ENCODE measurements at regions of chr2 and their contacts with region 1.

Region 1: GRCh38 chr2:172710584-172711024 is 25.0 kb upstream of the RAPGEF4 start:
- DNase-seq: no peak
- ATAC-seq: peak; percentile 55
- H3K4me3 ChIP-seq: no peak overlapping the region
- H3K27ac ChIP-seq: no peak overlapping the region
- H3K4me1 ChIP-seq: no peaks in the 10 kb centered on the region
- H3K27me3 ChIP-seq: peaks cover 0 to 6% of the 10 kb centered on the region in 2 experiments; a peak in 2 of 4 replicates
- CTCF ChIP-seq: peak; percentile 61 to 67 (median 63); a peak in 5 of 6 replicates
- EP300 ChIP-seq: no peak
- POLR2A ChIP-seq: no peak
- RAD21 ChIP-seq: peak; percentile 75

Region 2: GRCh38 chr2:172484253-172484652 is 226.4 kb before region 1 on chr2:
- CTCF ChIA-PET with region 1: no interaction called
- POLR2A ChIA-PET with region 1: no interaction called
- RAD21 ChIA-PET with region 1: no interaction called
- SMC1A ChIA-PET with region 1: no interaction called
- in situ Hi-C with region 1: no loop called
- intact Hi-C with region 1: loop called (anchors 10 kb)
- DNase-seq: no peak
- ATAC-seq: no peak
- H3K4me3 ChIP-seq: no peak overlapping the region
- H3K27ac ChIP-seq: no peak overlapping the region
- H3K4me1 ChIP-seq: no peaks in the 10 kb centered on the region
- H3K27me3 ChIP-seq: no peaks in the 10 kb centered on the region
- CTCF ChIP-seq: peak in 2 of 3 experiments; percentile 28 to 39; a peak in 4 of 6 replicates
- EP300 ChIP-seq: no peak
- POLR2A ChIP-seq: no peak
- RAD21 ChIP-seq: peak; percentile 25

Region 3: GRCh38 chr2:172588931-172589330 is 121.7 kb before region 1 on chr2:
- CTCF ChIA-PET with region 1: interaction called, 13 read pairs
- POLR2A ChIA-PET with region 1: no interaction called
- RAD21 ChIA-PET with region 1: no interaction called
- SMC1A ChIA-PET with region 1: no interaction called
- in situ Hi-C with region 1: no loop called
- intact Hi-C with region 1: loop called (anchors 2 kb)
- DNase-seq: no peak
- ATAC-seq: no peak
- H3K4me3 ChIP-seq: no peak overlapping the region
- H3K27ac ChIP-seq: no peak overlapping the region
- H3K4me1 ChIP-seq: no peaks in the 10 kb centered on the region
- H3K27me3 ChIP-seq: no peaks in the 10 kb centered on the region
- CTCF ChIP-seq: no peak
- EP300 ChIP-seq: no peak
- POLR2A ChIP-seq: no peak
- RAD21 ChIP-seq: no peak

Region 4: GRCh38 chr2:172596776-172597175 is 113.8 kb before region 1 on chr2:
- CTCF ChIA-PET with region 1: interaction called, 13 read pairs
- POLR2A ChIA-PET with region 1: no interaction called
- RAD21 ChIA-PET with region 1: no interaction called
- SMC1A ChIA-PET with region 1: no interaction called
- in situ Hi-C with region 1: no loop called
- intact Hi-C with region 1: loop called (anchors 2 kb)
- DNase-seq: peak; percentile 17
- ATAC-seq: no peak
- H3K4me3 ChIP-seq: no peak overlapping the region
- H3K27ac ChIP-seq: peak overlapping the region; percentile 48
- H3K4me1 ChIP-seq: no peaks in the 10 kb centered on the region
- H3K27me3 ChIP-seq: no peaks in the 10 kb centered on the region
- CTCF ChIP-seq: no peak
- EP300 ChIP-seq: no peak
- POLR2A ChIP-seq: no peak
- RAD21 ChIP-seq: no peak

Region 5: DNA sequence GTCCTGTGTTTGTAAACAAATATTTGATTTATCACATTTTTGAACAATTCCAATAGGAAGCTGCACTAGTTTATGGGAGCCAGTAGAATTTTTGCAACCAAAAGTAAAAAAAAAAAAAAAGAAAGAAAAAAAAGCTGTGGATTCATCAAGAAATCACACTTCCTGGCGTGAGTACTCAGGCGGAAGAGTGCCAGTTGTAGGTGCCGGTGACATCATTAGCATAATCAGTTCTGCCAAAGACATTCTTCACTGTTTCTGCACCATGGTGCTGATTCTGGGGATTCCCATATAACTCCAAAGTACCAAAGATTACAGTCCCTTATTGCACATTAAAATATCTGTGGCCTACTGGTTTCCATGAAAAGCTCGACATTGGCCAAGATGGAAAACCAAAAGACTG is 57.8 kb after region 1 on chr2:
- CTCF ChIA-PET with region 1: no interaction called
- POLR2A ChIA-PET with region 1: no interaction called
- RAD21 ChIA-PET with region 1: no interaction called
- SMC1A ChIA-PET with region 1: no interaction called
- in situ Hi-C with region 1: no loop called
- intact Hi-C with region 1: no loop called
- DNase-seq: no peak
- ATAC-seq: no peak
- H3K4me3 ChIP-seq: no peak overlapping the region
- H3K27ac ChIP-seq: no peak overlapping the region
- H3K4me1 ChIP-seq: no peaks in the 10 kb centered on the region
- H3K27me3 ChIP-seq: no peaks in the 10 kb centered on the region
- CTCF ChIP-seq: no peak
- EP300 ChIP-seq: no peak
- POLR2A ChIP-seq: no peak
- RAD21 ChIP-seq: no peak

Region 6: GRCh38 chr2:173898178-173898668 is 1187.6 kb after region 1 on chr2:
- CTCF ChIA-PET with region 1: no interaction called
- POLR2A ChIA-PET with region 1: no interaction called
- RAD21 ChIA-PET with region 1: no interaction called
- SMC1A ChIA-PET with region 1: no interaction called
- in situ Hi-C with region 1: no loop called
- intact Hi-C with region 1: no loop called
- DNase-seq: peak; percentile 94
- ATAC-seq: peak; percentile 94
- H3K4me3 ChIP-seq: peak overlapping the region; percentile 17; the same call in 1 of the 2 replicates
- H3K27ac ChIP-seq: peak overlapping the region; percentile 78
- H3K4me1 ChIP-seq: peaks cover 40% of the 10 kb centered on the region
- H3K27me3 ChIP-seq: no peaks in the 10 kb centered on the region
- CTCF ChIP-seq: no peak
- EP300 ChIP-seq: peak; percentile 57 to 94; a peak in 3 of 4 replicates
- POLR2A ChIP-seq: no peak
- RAD21 ChIP-seq: no peak

Measured in GM12878 (cell line).